HEK293 (cell line): ENCODE measurements at regions of chr2 and their contacts with region 1.

Region 1: GRCh38 chr2:20781656-20782265 is 41.1 kb downstream of the LDAH start:
- H3K4me3 ChIP-seq: no peak overlapping the region
- H3K27ac ChIP-seq: no peak overlapping the region
- H3K4me1 ChIP-seq: no peaks in the 10 kb centered on the region
- CTCF ChIP-seq: no peak

Region 2: DNA sequence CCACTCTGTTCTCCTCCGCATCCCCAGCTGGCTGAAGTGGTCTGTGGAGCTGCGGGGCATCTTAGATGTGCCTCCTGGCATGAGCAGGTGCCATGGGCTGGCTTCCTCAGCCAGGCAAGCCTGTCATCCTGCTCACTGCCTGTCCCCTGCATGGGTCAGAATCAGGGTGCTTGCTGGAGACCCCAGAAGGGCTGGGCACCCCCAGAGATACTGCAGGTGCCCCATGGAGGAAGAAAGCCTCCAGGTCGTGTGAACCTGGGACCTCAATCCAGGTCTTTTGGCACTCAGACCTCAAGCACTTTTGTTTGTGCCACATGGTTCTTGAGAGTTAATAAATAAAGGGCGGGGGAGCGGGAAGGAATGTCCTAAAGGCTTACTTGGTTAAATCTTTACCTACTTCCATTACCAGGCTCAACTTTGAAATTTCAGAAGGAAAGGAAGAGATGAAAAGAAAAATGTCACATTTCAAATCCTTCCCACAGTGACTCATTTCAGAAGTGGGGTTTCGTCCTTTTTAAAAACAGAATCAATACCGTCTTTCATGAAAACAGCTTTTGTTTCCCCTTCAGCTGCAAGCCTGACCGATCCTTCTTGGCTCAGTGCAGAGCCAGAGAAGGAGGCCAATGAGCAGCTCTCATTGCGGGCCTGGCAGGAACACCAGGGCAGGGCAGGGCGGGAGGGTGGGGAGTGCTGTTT is 265.0 kb before region 1 on chr2:
- CTCF ChIA-PET with region 1: no interaction called
- POLR2A ChIA-PET with region 1: no interaction called
- H3K4me3 ChIP-seq: no peak overlapping the region
- H3K27ac ChIP-seq: no peak overlapping the region
- H3K4me1 ChIP-seq: no peaks in the 10 kb centered on the region
- CTCF ChIP-seq: no peak

Region 3: GRCh38 chr2:20796374-20796791 is 14.6 kb after region 1 on chr2:
- CTCF ChIA-PET with region 1: interaction called, 16 read pairs
- POLR2A ChIA-PET with region 1: no interaction called
- H3K4me3 ChIP-seq: no peak overlapping the region
- H3K27ac ChIP-seq: no peak overlapping the region
- H3K4me1 ChIP-seq: no peaks in the 10 kb centered on the region
- CTCF ChIP-seq: no peak